ENCODE measurements at regions of chr7 and their contacts with region 1.

Region 1: DNA sequence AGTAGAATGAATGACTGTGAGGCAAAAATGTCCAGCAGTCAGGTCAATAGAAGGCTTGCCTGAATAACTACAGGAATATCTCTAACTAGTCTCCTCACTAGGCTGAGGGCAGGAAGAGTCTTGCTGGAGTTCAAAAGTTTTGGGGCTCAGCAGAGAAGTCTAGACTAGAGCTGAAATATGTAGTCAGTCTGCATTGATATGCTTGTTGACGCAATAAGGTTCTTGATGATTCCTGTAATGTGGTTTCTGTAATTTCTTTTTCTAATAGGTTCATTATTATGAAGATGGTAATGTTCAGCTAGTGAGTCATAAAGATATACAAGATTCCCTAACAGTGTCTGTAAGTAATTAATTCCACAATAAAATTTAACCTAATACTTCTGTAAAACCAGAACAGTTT is 41.5 kb upstream of the ST7 start:
- DNase-seq: no peak

Region 2: DNA sequence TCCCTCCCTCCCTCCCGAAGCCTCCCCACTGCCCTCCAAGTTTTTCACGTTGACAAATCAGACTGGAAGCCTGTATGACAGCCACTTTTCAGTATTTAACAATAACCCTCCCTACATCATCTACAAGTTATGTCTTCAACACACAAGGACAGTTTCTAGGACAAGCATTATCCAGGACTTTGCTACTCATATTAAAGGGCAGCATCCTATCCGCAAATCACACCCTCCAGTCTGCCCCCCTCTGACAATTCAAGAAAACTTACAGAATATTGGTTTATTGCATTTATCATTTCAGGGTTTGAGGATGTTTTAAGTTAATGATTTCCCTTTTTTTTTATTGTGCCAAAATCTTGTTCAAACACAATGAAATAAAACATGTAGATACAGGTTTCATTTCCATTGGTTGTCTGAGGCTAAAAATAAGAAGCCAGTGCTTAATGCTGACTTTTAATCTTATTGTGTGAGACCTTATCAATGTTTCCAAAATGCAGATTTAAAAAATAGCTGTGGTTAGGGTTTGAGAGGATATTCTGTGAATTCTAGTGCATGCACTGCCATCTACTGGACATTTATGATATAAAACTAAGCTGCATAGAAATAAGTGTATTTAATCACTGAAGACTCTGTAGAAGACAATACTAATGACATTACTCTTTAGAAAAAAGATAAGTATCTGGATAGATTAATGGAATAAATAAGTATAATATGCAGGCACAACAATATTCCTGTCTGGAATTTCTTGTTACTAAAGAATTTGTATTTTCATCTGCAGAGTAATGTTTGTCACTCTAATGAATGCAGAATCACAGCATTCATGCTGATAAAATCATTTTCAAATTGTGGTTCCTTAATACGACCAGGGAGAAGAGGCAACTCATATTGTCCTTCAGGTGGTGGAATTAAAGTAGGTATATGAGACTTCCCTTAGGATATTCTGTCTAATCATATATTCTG is 322.9 kb before region 1 on chr7:
- intact Hi-C with region 1: no loop called
- DNase-seq: no peak

Region 3: DNA sequence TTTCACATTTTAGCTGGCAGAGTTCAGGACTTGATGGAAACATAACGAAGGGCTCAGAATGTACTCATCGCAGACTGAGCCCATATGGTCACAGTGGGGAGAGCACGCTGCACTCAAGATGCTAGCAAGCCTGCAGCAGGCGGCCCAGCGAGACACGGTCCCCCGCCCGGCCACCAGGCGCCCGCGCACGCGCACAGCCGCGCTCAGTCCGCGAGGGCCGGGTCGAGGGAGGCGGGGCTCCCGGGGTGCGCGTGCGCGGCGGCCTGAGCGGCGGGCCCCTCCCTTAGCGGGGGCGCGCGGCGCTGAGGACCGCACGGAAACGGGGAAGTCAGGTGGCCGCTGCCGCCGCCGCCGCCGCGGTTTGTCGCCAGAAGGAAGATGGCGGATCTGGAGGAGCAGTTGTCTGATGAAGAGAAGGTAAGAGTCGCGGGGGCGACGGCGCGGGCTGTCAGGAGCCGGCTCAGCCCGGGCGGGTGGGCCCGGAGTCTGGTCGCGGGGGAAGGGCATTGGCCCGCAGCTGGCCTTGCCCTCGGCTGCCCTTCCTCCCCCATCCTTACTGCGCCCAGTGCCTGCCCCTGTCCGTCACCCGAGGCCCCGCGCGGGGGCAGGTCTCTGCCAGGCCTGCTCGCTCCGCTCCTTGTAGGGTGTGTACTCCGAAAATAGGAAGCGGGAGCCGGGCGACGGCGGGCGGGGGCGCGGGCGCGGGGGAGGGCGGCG is 49.4 kb before region 1 on chr7 and contains the start of gene CAPZA2:
- intact Hi-C with region 1: loop called (anchors 10 kb)
- DNase-seq: peak; percentile 97
- total RNA-seq, gene CAPZA2: 313 TPM